Mammary epithelial cell (primary cell): ENCODE measurements at regions of chr11 and their contacts with region 1.

Region 1: GRCh38 chr11:12122083-12122482 is 11.7 kb downstream of the MICAL2 start:
- DNase-seq: no peak
- H3K4me3 ChIP-seq: no peak overlapping the region
- H3K27ac ChIP-seq: no peak overlapping the region
- H3K4me1 ChIP-seq: peaks cover 97% of the 10 kb centered on the region
- H3K27me3 ChIP-seq: no peaks in the 10 kb centered on the region
- CTCF ChIP-seq: peak; percentile 51 to 55

Region 2: DNA sequence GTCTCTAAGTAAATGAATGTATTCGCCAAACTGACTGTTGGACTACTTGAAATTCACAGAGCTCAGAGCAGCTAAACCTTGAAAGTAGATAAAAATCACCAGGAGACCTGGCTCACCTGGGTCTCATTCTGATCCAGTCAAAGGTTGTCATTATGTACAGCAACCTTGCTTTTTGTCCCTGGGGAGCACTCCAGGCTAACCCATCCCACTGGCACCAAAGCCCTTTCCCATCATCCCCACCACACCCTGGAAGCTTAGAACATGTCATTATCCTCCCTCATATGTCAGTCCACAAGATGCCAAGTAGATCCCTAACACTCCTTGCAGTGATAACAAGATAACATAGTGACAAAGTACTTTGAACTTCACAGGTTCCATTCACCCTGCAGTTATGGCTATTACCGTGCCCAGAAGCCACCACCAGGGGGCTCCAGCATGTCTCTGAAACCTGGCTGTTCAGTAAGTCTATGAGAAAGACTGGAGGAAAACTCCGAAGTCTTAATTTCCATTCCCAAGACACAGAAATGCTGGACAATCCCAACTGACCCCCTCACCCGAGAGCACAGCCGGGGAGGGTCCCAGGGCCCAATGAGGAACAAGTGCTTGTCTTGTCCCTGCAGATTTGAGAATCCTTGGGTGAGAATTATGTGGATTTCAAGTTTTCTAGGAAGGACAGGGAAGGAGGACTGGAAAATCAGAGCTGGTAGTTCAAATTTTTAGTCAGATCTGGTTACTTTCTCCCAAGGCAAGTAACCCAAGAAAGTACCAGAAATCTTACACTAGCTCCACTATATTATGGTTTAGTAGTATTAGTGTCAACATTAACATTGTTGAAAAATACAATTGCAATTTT is 323.3 kb before region 1 on chr11:
- CTCF ChIA-PET with region 1: no interaction called
- dilution Hi-C with region 1: no loop called
- in situ Hi-C with region 1: no loop called
- intact Hi-C with region 1: no loop called
- DNase-seq: no peak
- H3K4me3 ChIP-seq: no peak overlapping the region
- H3K27ac ChIP-seq: no peak overlapping the region
- H3K4me1 ChIP-seq: no peaks in the 10 kb centered on the region
- H3K27me3 ChIP-seq: peaks cover 2% of the 10 kb centered on the region
- CTCF ChIP-seq: peak; percentile 88 to 96

Region 3: GRCh38 chr11:12029738-12030363 is 92.2 kb before region 1 on chr11:
- CTCF ChIA-PET with region 1: no interaction called
- dilution Hi-C with region 1: no loop called
- in situ Hi-C with region 1: no loop called
- intact Hi-C with region 1: no loop called
- DNase-seq: peak; percentile 69
- H3K4me3 ChIP-seq: no peak overlapping the region
- H3K27ac ChIP-seq: no peak overlapping the region
- H3K4me1 ChIP-seq: peaks cover 7% of the 10 kb centered on the region
- H3K27me3 ChIP-seq: no peaks in the 10 kb centered on the region
- CTCF ChIP-seq: no peak

Region 4: DNA sequence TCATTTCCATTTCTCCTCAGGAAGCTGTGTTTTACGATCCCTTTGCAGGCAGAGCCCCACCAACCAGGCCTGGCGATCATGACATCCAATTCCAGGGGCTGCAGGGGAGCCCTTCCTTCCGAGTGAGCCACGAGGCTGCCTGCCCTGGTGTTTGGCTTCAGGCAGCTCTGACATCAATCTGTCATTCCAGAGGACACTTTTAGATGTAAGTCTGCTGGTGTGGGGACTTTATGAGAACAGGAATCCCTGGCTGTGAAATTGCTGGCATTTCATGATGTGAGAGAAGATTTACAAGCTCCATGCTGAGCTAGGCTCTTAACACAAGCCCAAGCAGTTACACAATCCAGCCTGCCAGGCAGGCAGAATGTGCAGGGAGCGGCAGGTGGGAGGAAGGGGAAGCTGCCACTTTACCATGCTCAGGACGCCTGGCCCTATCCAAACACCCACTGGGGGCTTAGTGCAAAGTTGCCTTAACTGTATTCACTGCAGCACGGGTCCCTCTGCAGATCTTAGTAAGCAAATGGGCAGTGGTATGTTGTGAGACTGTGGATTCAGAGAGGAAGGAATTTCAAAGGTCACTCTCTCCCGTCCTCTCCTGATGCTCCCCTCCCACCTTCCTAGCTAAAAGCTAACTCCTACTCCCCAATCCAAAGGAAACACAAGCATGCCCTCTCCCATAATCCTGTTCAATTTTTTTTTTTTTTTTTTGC is 55.1 kb before region 1 on chr11:
- CTCF ChIA-PET with region 1: no interaction called
- dilution Hi-C with region 1: no loop called
- in situ Hi-C with region 1: no loop called
- intact Hi-C with region 1: loop called (anchors 1 kb)
- DNase-seq: peak; percentile 49
- H3K4me3 ChIP-seq: no peak overlapping the region
- H3K27ac ChIP-seq: peak overlapping the region; percentile 91
- H3K4me1 ChIP-seq: peaks cover 41% of the 10 kb centered on the region
- H3K27me3 ChIP-seq: no peaks in the 10 kb centered on the region
- CTCF ChIP-seq: no peak

Region 5: GRCh38 chr11:12079726-12080556 is 42.1 kb before region 1 on chr11:
- CTCF ChIA-PET with region 1: no interaction called
- dilution Hi-C with region 1: loop called (anchors 5 kb)
- in situ Hi-C with region 1: no loop called
- intact Hi-C with region 1: no loop called
- DNase-seq: peak; percentile 98
- H3K4me3 ChIP-seq: no peak overlapping the region
- H3K27ac ChIP-seq: peak overlapping the region; percentile 99
- H3K4me1 ChIP-seq: peaks cover 41% of the 10 kb centered on the region
- H3K27me3 ChIP-seq: no peaks in the 10 kb centered on the region
- CTCF ChIP-seq: no peak

Region 6: GRCh38 chr11:12139144-12139881 is 17.2 kb after region 1 on chr11:
- CTCF ChIA-PET with region 1: no interaction called
- dilution Hi-C with region 1: no loop called
- in situ Hi-C with region 1: no loop called
- intact Hi-C with region 1: no loop called
- DNase-seq: no peak
- H3K4me3 ChIP-seq: no peak overlapping the region
- H3K27ac ChIP-seq: peak overlapping the region; percentile 84
- H3K4me1 ChIP-seq: peaks cover 57% of the 10 kb centered on the region
- H3K27me3 ChIP-seq: no peaks in the 10 kb centered on the region
- CTCF ChIP-seq: no peak

Region 7: DNA sequence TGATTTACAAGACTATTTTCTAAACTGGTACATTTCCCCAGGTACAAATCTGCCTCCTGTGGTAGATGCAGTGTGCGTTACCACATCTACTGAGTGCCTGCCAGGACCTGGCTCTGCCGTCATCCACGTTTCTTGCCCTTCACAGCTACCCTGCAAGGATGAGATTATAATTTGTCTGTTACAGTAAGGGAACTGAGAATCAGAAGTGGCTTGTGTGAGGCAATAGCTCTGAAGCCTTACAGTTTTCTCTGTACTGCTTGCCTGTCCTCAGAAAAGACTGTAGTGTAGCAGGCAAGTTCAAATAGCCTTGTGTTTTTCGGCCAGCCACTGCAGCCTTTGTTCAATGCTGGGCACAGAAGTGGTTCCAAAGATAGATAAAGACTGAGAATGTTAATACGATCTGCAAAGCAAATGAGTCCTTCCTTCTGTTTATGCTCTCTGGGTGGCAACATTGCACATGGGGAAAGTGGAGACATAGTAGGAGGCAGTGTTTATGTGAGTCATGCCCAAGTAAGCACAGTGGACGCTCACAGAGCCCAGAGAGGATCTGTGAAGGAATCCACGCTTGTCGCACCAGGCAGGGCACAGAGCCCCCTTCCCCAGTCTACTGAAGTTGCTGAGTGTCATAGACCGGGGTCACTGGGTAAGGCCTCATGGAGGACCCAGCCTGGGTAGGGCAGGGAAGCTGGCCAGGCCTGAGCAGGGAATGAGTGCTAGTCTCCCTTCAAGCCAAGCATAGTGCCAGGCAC is 37.4 kb after region 1 on chr11:
- CTCF ChIA-PET with region 1: no interaction called
- dilution Hi-C with region 1: loop called (anchors 5 kb)
- in situ Hi-C with region 1: no loop called
- intact Hi-C with region 1: loop called (anchors 1 kb)
- DNase-seq: peak; percentile 57
- H3K4me3 ChIP-seq: no peak overlapping the region
- H3K27ac ChIP-seq: no peak overlapping the region
- H3K4me1 ChIP-seq: peaks cover 56% of the 10 kb centered on the region
- H3K27me3 ChIP-seq: no peaks in the 10 kb centered on the region
- CTCF ChIP-seq: peak in 1 of 2 donors; percentile 35

Region 8: GRCh38 chr11:12167098-12168000 is 45.3 kb after region 1 on chr11:
- CTCF ChIA-PET with region 1: no interaction called
- dilution Hi-C with region 1: loop called (anchors 5 kb)
- in situ Hi-C with region 1: no loop called
- intact Hi-C with region 1: loop called (anchors 1 kb)
- DNase-seq: peak; percentile 98
- H3K4me3 ChIP-seq: no peak overlapping the region
- H3K27ac ChIP-seq: peak overlapping the region; percentile 95
- H3K4me1 ChIP-seq: peaks cover 68% of the 10 kb centered on the region
- H3K27me3 ChIP-seq: no peaks in the 10 kb centered on the region
- CTCF ChIP-seq: no peak

Region 9: GRCh38 chr11:12225046-12225740 is 103.1 kb after region 1 on chr11:
- CTCF ChIA-PET with region 1: interaction called, 14 read pairs
- dilution Hi-C with region 1: no loop called
- in situ Hi-C with region 1: no loop called
- intact Hi-C with region 1: no loop called
- DNase-seq: no peak
- H3K4me3 ChIP-seq: no peak overlapping the region
- H3K27ac ChIP-seq: peak overlapping the region; percentile 15
- H3K4me1 ChIP-seq: peaks cover 35% of the 10 kb centered on the region
- H3K27me3 ChIP-seq: no peaks in the 10 kb centered on the region
- CTCF ChIP-seq: no peak

Region 10: GRCh38 chr11:12281571-12282478 is 159.7 kb after region 1 on chr11:
- CTCF ChIA-PET with region 1: no interaction called
- dilution Hi-C with region 1: no loop called
- in situ Hi-C with region 1: no loop called
- intact Hi-C with region 1: loop called (anchors 5 kb)
- DNase-seq: peak; percentile 67
- H3K4me3 ChIP-seq: no peak overlapping the region
- H3K27ac ChIP-seq: no peak overlapping the region
- H3K4me1 ChIP-seq: peaks cover 44% of the 10 kb centered on the region
- H3K27me3 ChIP-seq: no peaks in the 10 kb centered on the region
- CTCF ChIP-seq: peak; percentile 93 to 96

Region 11: DNA sequence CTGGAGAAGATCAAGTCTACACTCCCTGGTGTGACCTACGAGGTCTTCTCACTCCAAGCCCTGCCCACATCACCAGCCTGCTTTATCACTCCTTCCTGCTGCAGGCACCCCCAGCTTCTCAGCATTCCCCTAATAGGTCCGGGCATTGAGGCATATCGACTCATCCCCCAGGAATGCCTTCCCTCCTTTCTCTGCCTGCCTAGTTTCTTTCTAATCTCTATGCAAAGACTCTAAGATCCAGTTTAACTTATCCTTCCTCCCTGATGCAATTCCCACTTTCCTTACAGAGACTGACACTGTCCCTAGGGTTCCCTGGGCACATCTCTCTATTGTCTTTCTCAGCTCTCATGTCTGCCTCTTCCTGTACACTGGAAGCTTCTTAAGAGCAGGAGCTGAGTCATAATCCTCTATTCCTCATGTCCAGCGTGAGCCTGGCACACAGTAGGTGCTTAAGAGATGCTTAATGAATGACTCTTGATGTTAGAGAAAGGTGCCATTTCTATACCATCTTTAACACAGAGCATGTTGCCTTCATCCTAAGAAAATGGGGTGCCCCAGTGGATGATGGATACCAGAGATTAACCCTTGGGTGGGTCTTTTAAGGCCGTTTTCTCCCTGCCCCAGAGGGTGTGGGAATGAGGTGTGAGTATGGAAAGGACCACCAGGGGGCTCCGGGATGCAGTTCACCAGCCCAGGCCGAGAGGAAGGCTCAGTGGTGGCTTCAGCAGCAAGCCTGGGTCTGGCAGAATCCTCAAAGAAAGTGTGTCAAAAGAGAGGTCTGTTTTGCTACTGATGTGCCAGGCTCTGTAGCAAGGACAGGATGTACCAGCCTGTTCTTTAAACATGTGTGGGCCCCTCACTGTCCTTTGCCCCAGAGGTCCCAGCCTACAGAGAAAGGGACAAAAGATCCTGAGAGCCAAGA is 290.0 kb after region 1 on chr11:
- CTCF ChIA-PET with region 1: no interaction called
- dilution Hi-C with region 1: no loop called
- in situ Hi-C with region 1: no loop called
- intact Hi-C with region 1: no loop called
- DNase-seq: peak; percentile 86
- H3K4me3 ChIP-seq: no peak overlapping the region
- H3K27ac ChIP-seq: peak overlapping the region; percentile 81
- H3K4me1 ChIP-seq: peaks cover 45% of the 10 kb centered on the region
- H3K27me3 ChIP-seq: no peaks in the 10 kb centered on the region
- CTCF ChIP-seq: peak; percentile 74 to 76